ENCODE measurements at regions of chr20 and their contacts with region 1.

Region 1: DNA sequence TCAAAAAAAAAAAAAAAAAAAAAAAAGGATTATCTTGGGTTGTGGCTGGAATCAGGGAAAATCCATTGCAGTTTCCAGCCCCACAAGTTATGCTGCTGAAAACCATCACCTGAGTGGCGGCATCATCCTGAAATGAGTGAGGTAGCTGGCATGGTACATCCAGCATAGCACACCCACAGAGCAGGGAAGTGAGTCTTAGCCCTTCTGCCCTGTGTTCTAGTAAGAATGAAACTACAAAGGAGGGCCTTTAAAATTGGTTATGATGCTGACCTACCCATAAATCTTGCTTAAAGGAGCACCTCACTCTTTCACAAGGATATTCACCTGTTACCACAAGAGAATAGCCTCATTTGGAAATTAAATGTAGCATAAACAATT is 119.2 kb downstream of the NFATC2 start:
- DNase-seq: peak; percentile 71
- ATAC-seq: peak; percentile 77
- H3K4me3 Mint-ChIP-seq: no peak overlapping the region
- H3K27ac Mint-ChIP-seq: peak overlapping the region; percentile 92
- H3K4me1 Mint-ChIP-seq: peaks cover 84% of the 10 kb centered on the region
- H3K27me3 Mint-ChIP-seq: no peaks in the 10 kb centered on the region

Region 2: DNA sequence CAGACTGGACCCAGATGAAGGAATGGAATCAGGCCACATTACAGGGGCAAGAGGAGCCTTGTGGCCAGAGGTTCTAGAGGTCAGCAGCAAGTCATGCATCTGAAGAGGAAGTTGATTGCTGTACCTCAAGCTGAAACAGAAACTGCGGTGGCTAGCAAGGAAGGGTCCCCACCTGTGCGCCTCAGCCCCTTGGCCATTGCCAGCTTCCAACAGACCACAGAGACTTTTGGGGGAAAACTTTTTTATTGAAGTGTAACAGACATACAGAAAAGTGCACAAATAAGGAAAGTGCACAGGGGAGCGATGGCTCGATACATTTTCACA is 1637.5 kb before region 1 on chr20:
- CTCF ChIA-PET with region 1: no interaction called
- POLR2A ChIA-PET with region 1: no interaction called
- intact Hi-C with region 1: no loop called
- DNase-seq: no peak
- ATAC-seq: no peak
- H3K4me3 Mint-ChIP-seq: no peak overlapping the region
- H3K27ac Mint-ChIP-seq: no peak overlapping the region
- H3K4me1 Mint-ChIP-seq: peaks cover 8% of the 10 kb centered on the region
- H3K27me3 Mint-ChIP-seq: peaks cover 14% of the 10 kb centered on the region

Region 3: DNA sequence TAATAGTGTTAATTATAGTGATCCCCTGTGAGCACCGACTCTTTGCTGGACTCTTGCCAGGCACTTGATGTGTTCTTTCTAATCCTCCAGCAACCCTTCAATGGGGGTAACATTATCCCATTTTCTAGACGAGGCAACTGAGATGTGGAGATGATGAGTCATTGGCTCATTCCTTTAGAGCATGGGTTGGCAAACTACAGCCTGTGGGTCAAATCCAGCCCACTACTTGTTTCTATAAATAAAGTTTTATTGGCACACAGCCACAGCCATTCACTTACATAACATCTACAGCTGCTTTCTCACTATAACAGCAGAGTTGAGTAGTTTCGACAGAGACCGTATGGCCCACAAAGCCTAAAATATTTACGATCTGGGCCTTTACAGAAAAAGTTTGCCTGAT is 150.9 kb before region 1 on chr20:
- CTCF ChIA-PET with region 1: no interaction called
- POLR2A ChIA-PET with region 1: no interaction called
- intact Hi-C with region 1: no loop called
- DNase-seq: no peak
- ATAC-seq: no peak
- H3K4me3 Mint-ChIP-seq: no peak overlapping the region
- H3K27ac Mint-ChIP-seq: no peak overlapping the region
- H3K4me1 Mint-ChIP-seq: peaks cover 2% of the 10 kb centered on the region
- H3K27me3 Mint-ChIP-seq: peaks cover 22% of the 10 kb centered on the region

Region 4: DNA sequence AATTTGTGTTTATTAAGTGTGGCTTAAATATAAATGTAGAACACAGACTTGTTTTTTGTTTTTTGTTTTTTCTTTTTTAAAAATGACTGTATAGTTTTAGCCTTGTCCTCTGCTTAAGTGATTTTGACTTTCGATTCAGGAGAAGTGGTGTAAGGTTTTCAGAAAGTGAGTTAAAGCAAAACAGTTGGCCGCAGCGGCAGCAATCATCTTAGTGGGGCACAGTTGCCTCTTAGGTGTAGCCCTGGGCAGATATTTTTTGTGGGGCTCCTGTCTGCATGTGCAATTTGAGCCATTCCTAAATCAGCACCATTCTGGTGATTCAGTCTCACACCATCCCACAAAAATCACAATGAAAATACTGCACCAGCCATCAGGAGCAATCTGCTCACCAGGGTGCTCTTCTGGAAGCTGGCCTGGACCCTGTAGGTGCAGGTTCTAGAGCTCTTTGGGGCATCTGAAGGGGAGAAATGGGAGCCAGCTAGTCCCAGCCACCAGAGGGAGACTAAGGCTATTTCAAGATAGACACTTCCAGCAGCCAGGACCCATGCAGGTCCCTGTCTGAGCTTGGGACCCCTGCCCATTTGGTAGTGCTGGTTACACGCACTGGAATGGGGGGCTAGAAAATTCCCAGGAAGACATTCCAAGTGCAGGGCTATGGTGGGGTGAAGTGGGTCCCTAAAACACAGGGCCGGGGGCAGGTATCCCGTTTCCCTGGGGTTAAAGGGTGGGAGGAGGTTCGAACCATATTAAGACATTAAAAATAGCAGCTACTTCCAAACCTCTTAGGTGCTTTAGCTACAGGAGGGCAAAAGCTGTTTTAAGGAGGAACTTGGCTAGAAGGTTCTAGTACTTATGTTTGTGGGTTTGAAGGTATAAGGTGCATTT is 37.4 kb before region 1 on chr20:
- CTCF ChIA-PET with region 1: interaction called, 3 read pairs
- POLR2A ChIA-PET with region 1: no interaction called
- intact Hi-C with region 1: loop called (anchors 2 kb)
- DNase-seq: peak; percentile 48
- ATAC-seq: no peak
- H3K4me3 Mint-ChIP-seq: no peak overlapping the region
- H3K27ac Mint-ChIP-seq: no peak overlapping the region
- H3K4me1 Mint-ChIP-seq: peaks cover 64% of the 10 kb centered on the region
- H3K27me3 Mint-ChIP-seq: no peaks in the 10 kb centered on the region

Region 5: DNA sequence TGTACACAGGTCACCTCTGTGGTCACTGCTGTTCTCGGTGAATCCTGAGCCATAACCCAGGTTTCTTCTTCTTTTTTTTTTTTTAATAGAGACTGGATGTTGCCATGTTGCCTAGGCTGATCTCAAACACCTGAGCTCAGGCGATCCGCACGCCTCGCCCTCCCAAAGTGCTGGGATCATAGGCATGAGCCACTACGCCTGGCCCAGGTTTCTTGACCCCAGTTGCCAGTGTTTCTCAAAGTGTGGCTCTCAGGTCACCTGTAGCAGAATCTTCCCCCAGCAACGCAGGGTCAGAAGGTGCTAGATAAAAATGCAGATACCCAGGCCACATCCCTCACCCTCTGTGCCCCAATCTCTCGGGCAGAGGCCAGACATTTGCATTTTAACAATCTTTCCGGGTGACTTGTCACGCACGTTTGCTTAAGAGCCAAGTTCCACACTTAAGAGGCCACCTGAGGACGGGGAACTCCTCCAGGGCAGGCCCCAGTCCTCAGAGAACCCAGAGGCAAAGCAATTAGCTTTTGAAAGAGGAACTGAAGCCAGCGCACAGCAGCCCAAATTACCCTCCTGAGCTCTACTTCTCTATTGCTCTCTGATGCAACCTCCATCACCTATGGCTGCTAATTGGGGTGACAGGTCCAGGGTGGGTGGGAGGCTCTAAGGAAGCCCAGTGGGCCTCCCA is 37.4 kb after region 1 on chr20:
- CTCF ChIA-PET with region 1: no interaction called
- POLR2A ChIA-PET with region 1: no interaction called
- intact Hi-C with region 1: loop called in 1 of 2 experiments (anchors 5 kb)
- DNase-seq: no peak
- ATAC-seq: no peak
- H3K4me3 Mint-ChIP-seq: no peak overlapping the region
- H3K27ac Mint-ChIP-seq: peak overlapping the region; percentile 12
- H3K4me1 Mint-ChIP-seq: peaks cover 43% of the 10 kb centered on the region
- H3K27me3 Mint-ChIP-seq: no peaks in the 10 kb centered on the region

Region 6: DNA sequence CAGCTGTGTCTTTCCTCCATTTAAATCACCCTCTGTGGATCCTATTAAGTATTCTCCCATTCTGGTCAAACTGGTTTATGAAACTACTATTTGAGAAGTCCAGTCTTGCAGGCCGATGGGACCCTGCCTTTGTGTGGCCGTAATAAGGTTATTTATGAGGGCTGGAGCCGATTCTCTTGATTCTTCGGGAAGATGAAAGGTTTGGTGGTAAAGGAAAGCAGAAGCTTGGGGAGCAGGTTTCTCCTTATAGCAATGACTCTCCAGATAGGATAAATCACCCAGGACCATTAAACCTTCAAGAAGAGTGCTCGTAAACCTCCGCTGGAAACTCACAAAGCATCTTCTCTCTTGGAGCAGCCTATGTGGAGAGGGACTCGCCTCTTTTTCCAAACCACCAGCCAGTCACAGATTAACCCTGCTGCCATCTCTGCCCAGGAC is 448.6 kb after region 1 on chr20:
- CTCF ChIA-PET with region 1: no interaction called
- POLR2A ChIA-PET with region 1: no interaction called
- intact Hi-C with region 1: no loop called
- DNase-seq: no peak
- ATAC-seq: no peak
- H3K4me3 Mint-ChIP-seq: no peak overlapping the region
- H3K27ac Mint-ChIP-seq: no peak overlapping the region
- H3K4me1 Mint-ChIP-seq: no peaks in the 10 kb centered on the region
- H3K27me3 Mint-ChIP-seq: peaks cover 9% of the 10 kb centered on the region